Spleen (tissue), 13 donors: ENCODE measurements at regions of chr18 and their contacts with region 1.

Region 1: DNA sequence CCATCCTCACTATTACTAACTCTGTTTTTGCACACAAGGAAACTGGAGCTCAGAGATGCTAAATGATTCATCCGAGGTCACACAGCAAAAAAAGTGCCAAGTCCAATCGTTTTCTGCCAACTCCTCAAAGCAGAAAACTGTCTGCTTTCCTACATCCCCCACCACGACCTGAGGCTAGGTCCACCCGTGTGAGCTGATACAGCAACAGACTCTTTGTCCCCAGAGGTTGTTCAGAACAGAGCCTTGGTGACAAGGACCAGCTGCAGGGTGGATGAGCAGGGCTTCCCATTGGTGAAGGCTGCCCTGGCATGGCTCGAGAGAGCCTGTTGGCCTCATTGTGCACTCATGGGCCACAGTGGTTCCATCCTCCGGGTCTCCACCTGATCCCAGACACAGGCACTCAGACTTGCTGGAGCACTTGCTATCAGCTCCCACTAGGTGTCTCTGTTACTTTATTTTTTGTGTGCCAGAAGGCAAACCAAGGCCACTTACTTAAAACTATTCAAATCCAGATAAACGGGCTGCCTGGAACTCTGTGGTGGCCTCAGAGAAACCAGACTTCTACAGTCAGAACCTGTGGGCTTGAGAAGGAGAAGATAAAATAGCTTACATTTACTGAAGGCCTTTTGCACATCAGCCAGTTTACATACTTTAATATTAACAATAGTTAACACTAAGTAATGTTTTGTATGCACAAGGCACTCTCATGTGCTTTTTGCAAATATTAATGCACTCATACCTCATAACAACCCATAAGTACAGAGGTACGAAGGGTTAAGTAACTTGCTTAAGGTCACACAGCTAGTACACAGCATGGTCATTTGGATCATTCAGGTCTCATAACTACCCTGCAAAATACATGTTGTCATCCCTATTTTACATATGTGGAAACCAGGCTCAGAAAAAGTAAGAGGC is 62.9 kb upstream of the CTIF start:
- DNase-seq: no peak
- H3K4me3 ChIP-seq: no peak overlapping the region
- H3K27ac ChIP-seq: no peak overlapping the region
- H3K4me1 ChIP-seq: peaks cover 0 to 6% (median 0%) of the 10 kb centered on the region in 6 donors
- H3K27me3 ChIP-seq: peaks cover 0 to 7% (median 0%) of the 10 kb centered on the region in 7 donors
- CTCF ChIP-seq: peak; percentile 43 to 88 (median 76)
- POLR2A ChIP-seq: no peak

Region 2: DNA sequence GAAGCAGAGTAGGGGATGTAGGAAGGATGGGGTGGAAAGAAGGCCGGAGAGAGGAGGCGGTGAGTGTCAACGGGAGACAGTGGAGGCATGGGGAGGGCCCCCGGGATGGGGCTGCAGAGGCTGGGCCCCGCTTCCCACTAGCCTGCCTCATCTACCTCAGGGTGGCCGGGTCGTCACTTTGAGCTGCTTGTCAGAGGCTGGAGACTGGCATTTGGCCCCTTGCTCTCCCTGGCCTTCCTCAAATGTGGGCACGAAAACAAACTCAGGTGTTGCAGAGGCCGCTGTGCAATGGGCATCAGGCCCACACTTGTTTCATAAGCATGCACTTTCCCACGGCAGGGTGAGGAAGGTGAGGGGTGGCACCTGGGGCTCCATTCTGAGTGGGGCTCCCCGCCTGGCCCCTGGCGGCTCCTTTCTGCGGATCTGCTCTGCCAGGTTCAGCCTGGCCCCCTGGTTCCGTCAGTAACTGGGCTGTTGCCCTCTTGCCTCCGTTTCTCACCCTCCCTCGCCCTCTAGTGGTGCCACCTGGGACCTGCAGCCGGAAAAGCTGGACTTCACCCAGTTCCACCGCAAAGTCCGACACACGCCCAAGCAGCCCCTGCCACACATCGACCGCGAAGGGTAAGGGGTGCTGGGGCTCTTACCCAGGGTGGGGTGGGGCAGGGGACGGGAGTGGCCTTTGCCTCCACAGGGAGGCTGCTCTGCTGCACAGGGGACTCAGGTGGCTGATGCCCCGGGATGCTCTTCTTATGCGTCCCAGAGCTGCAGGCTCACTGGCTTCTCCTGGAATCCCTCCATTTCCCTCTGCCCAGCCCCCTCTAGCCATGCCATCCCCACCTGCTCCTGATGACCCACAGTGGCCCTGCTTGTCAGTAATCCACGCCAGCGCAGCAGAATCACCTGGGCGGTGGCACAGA is 188.3 kb after region 1 on chr18:
- intact Hi-C with region 1: loop called (anchors 5 kb)
- DNase-seq: peak; percentile 90
- H3K4me3 ChIP-seq: no peak overlapping the region
- H3K27ac ChIP-seq: no peak overlapping the region
- H3K4me1 ChIP-seq: peaks cover 0 to 36% (median 10%) of the 10 kb centered on the region in 6 donors
- H3K27me3 ChIP-seq: no peaks in the 10 kb centered on the region
- CTCF ChIP-seq: peak; percentile 65 to 88 (median 82)
- POLR2A ChIP-seq: no peak